Panc1 (cell line): ENCODE measurements at regions of chr6 and their contacts with region 1.

Region 1: DNA sequence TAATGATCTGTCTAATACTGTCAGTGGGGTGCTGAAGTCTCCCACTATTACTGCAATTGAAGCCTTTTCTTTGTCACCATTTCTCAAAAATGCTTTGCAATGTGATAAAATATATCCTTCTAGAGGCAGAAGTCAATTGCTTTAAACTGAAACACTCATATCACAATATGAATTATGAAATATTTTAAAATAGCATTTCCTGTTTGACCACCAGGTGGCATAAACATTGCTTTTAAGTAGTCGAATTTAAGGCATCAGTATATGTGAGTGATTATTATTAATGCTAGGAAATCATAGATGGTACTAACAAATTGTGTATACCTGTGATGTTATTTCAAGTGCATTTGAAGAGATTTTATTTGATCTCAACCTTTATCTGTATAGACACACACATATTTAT is 87.5 kb downstream of the MEI4 start:
- DNase-seq: peak; percentile 4
- ATAC-seq: no peak
- H3K4me3 ChIP-seq: no peak overlapping the region
- H3K27ac ChIP-seq: no peak overlapping the region
- H3K4me1 ChIP-seq: no peaks in the 10 kb centered on the region
- H3K27me3 ChIP-seq: no peaks in the 10 kb centered on the region
- CTCF ChIP-seq: peak; percentile 37; the same call in 1 of the 2 replicates

Region 2: DNA sequence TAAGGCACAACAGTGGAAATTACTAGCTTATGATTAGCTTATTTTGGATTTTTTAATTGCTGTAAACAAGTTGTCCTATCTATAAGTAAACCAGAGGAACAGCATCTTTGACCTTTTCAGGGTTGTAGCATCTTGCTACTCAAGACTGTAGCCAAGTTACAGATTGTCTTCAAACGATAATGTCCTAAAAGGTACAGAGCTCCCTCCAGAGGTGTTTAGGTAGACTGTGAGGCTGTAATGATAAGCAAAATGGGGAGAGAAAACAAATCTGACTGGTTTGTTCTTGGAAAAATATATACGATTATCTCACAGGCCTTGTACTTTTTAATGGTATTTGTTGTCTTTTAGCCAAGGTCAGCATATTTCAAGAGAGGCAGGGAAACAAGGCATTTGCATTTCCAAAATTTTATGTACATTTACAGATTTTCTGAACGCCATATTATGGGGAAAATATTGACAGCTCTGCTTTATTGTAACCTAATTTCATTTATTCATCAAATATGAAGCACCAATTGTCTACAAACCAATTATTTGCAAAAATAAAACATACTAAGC is 185.9 kb after region 1 on chr6:
- CTCF ChIA-PET with region 1: no interaction called
- POLR2A ChIA-PET with region 1: no interaction called
- in situ Hi-C with region 1: no loop called
- intact Hi-C with region 1: loop called (anchors 10 kb)
- DNase-seq: no peak
- ATAC-seq: no peak
- H3K4me3 ChIP-seq: no peak overlapping the region
- H3K27ac ChIP-seq: no peak overlapping the region
- H3K4me1 ChIP-seq: no peaks in the 10 kb centered on the region
- H3K27me3 ChIP-seq: no peaks in the 10 kb centered on the region
- CTCF ChIP-seq: peak; percentile 25; the same call in 1 of the 2 replicates

Region 3: GRCh38 chr6:78243519-78243918 is 503.1 kb after region 1 on chr6:
- CTCF ChIA-PET with region 1: no interaction called
- POLR2A ChIA-PET with region 1: no interaction called
- in situ Hi-C with region 1: no loop called
- intact Hi-C with region 1: no loop called
- DNase-seq: no peak
- ATAC-seq: no peak
- H3K4me3 ChIP-seq: no peak overlapping the region
- H3K27ac ChIP-seq: no peak overlapping the region
- H3K4me1 ChIP-seq: no peaks in the 10 kb centered on the region
- H3K27me3 ChIP-seq: no peaks in the 10 kb centered on the region
- CTCF ChIP-seq: no peak